MCF 10A (cell line): ENCODE measurements at regions of chrX and their contacts with region 1.

Region 1: DNA sequence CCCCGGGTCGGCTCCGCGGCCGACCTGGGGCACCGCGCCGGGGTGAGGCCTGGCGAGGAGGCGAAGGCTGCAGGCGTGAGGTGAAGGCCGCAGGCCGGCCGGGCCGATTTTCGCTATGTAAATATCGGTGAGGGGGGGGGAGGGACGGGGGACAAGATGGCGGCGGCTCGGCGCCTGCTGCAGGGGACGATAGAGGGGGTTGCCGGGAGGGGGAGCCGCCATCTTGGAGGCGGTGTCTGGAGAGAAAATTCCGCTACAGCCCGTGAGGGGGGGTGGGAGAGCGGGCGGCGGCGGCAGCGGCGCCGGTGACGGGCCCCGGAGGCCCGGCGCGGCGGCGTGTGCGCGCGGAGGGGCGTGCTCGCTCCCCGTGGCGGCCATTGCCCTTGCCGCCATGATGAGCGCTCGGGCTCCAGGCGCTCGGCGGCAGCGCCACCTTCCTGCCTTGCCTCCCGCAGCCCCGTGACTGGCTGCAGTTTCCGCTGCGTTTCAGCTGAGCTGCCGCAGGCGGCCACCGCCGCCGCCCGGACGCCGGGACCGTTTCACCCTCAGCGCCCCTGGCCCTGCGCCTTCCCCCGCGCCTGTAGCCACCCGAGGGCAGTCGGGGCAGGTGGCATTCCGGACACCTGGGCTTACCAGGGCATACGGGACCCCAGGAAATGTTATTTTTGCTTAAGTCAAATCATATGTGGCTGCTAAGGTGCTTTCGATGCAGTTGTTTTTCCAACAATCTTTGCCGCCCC is 692 bp downstream of the ZFX start:
- DNase-seq: peak; percentile 90
- H3K4me3 Mint-ChIP-seq: peak overlapping the region; percentile 92
- H3K27ac Mint-ChIP-seq: peak overlapping the region; percentile 92
- H3K4me1 Mint-ChIP-seq: peaks cover 53% of the 10 kb centered on the region
- H3K27me3 Mint-ChIP-seq: no peaks in the 10 kb centered on the region
- CTCF ChIP-seq: peak; percentile 43

Region 2: DNA sequence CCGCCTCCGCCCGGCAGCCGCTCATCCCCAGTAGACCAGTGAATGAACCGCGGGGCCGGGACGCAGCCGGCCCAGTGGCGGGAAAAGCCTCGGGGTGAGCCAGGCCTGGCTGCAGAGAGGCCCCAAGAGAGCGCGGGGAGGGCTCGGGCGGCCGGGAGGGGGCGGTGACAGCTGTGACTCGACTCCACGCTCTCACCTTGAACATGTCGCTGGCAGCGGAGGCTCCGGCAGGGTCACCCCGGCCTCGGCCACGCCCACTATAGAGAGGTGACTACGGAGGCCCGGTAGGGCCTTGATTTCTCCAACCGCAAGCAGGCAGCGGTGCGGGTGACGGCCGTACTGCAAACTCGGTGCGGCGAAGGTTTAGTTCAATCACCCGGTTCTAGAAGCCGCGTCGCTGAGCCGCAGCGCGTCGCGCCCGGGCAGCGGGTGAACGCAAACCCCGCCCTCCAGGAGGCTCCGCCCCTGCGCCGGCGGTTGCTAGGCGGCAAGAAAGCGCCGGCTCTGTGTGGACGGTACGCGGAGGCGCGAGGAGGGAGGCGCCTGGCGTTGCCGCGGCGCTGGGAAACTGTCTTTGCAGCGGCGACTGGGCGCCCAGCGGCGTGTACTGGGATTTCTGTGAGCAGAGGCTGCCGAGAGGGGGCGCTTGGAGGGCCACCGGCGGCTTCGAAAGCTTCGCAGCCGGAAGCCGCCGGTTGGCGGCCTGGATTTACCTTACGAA is 242.6 kb before region 1 on chrX and contains the starts of genes APOO and CXorf58:
- CTCF ChIA-PET with region 1: no interaction called
- POLR2A ChIA-PET with region 1: no interaction called
- intact Hi-C with region 1: loop called (anchors 2 kb)
- DNase-seq: peak; percentile 86
- H3K4me3 Mint-ChIP-seq: peak within 1 kb of the TSS; percentile 69
- H3K27ac Mint-ChIP-seq: peak within 1 kb of the TSS; percentile 66
- H3K4me1 Mint-ChIP-seq: no peaks in the 10 kb centered on the region
- H3K27me3 Mint-ChIP-seq: peaks cover 30% of the 10 kb centered on the region
- CTCF ChIP-seq: peak; percentile 48
- total RNA-seq, gene APOO: 35.9 and 37.2 TPM in 2 replicates
- total RNA-seq, gene CXorf58: not detected in 2 replicates

Region 3: DNA sequence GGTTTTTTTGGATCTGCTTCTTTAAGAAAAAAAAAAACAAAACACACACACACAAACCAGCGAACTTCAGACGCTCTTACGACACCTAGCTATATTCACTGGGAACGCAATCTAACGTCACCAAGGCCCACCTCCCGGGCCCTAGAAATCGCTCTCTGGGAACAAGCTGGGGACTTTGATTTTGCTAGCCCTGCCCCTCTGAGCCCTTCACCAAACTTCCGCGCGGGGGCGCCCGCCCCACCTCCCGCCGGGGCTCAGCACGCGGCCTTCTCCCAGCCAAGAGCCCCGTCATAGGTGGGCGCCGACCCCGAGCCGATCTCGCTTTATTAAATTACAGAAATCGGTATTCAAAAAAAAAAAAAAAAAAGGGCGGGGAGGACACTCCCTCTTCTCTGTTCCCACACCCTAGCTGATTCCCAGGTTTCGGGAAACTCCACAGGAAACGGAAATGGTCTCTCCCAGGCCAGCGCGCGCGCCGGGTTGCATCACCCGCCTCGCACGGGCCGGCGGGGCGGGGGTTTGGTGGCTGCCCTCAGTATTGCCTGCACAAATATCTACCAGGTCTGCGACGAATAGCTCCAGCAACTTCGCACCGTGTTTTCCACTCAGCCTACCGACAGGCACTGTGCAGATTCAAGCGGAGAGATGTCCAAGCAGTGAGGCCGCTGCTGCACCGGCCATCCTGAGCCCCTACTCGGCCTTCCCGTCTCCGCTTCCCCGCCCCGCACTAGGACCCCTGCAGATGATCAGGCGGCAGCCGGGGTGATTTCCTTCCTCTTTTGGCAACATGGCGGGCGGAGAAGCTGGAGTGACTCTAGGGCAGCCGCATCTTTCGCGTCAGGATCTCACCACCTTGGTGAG is 95.8 kb before region 1 on chrX and contains the start of gene EIF2S3:
- CTCF ChIA-PET with region 1: no interaction called
- POLR2A ChIA-PET with region 1: interaction called, 21 read pairs
- intact Hi-C with region 1: no loop called
- DNase-seq: peak; percentile 98
- H3K4me3 Mint-ChIP-seq: no peak within 1 kb of the TSS
- H3K27ac Mint-ChIP-seq: peak within 1 kb of the TSS; percentile 99
- H3K4me1 Mint-ChIP-seq: no peaks in the 10 kb centered on the region
- H3K27me3 Mint-ChIP-seq: peaks cover 10% of the 10 kb centered on the region
- CTCF ChIP-seq: peak; percentile 50
- total RNA-seq, gene EIF2S3: 354 and 391 TPM in 2 replicates

Region 4: DNA sequence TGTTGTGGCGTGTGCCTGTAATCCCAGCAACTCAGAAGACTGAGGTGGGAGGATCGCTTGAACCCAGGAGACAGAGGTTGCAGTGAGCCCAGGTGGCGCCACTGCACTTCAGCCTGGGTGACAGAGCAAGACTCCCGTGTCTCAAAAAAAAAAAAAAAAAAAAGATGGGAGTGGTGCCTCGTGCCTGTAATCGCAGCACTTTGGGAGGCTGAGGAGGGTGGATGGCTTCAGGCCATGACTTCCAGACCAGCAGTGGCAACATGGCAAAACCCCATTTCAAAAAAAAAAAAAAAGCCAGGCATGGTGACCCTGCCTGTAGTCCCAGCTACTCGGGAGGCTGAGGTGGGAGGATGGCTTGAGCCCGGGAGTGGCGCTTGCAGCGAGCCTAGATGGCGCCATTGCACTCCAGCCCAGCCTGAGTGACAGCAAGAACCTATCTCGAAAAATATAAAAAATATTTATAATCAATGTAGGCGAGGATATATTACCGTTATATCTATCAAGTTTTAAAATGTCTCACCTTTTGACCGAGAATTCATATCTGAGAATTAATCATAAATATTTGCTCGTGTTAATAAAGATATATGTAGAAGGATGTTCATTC is 68.5 kb before region 1 on chrX:
- CTCF ChIA-PET with region 1: interaction called, 3 read pairs
- POLR2A ChIA-PET with region 1: interaction called, 6 read pairs
- intact Hi-C with region 1: loop called (anchors 1 kb)
- DNase-seq: peak; percentile 84
- H3K4me3 Mint-ChIP-seq: peak overlapping the region; percentile 21
- H3K27ac Mint-ChIP-seq: no peak overlapping the region
- H3K4me1 Mint-ChIP-seq: no peaks in the 10 kb centered on the region
- H3K27me3 Mint-ChIP-seq: no peaks in the 10 kb centered on the region
- CTCF ChIP-seq: peak; percentile 65

Region 5: DNA sequence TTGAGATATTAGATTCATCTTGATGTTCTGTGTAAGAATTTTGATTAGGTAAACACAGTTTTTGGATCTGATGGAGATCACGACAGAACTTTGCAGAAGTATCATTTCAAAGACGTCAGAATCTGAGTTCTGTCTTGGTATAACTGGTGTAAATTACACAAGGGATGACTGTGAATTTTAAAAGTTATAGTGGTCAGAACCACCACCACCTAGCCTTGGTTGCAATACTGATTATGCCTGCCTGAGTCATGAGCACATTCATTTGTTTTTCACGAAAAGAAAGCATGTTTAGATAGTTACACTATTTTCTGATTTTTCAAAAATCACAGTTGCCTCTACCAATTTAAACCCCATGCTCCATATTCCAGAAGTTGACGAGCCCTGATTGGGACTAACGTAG is 54.1 kb after region 1 on chrX:
- CTCF ChIA-PET with region 1: no interaction called
- POLR2A ChIA-PET with region 1: interaction called, 5 read pairs
- intact Hi-C with region 1: loop called (anchors 10 kb)
- DNase-seq: peak; percentile 27
- H3K4me3 Mint-ChIP-seq: no peak overlapping the region
- H3K27ac Mint-ChIP-seq: no peak overlapping the region
- H3K4me1 Mint-ChIP-seq: peaks cover 51% of the 10 kb centered on the region
- H3K27me3 Mint-ChIP-seq: no peaks in the 10 kb centered on the region
- CTCF ChIP-seq: no peak

Region 6: GRCh38 chrX:24241822-24242648 is 91.8 kb after region 1 on chrX:
- CTCF ChIA-PET with region 1: interaction called, 3 read pairs
- POLR2A ChIA-PET with region 1: interaction called, 3 read pairs
- intact Hi-C with region 1: loop called (anchors 5 kb)
- DNase-seq: peak; percentile 58
- H3K4me3 Mint-ChIP-seq: no peak overlapping the region
- H3K27ac Mint-ChIP-seq: no peak overlapping the region
- H3K4me1 Mint-ChIP-seq: peaks cover 20% of the 10 kb centered on the region
- H3K27me3 Mint-ChIP-seq: peaks cover 27% of the 10 kb centered on the region
- CTCF ChIP-seq: peak; percentile 36